A673 (cell line): ENCODE measurements at regions of chr9 and their contacts with region 1.

Region 1: GRCh38 chr9:129610473-129611301 is 10.2 kb downstream of the C9orf50 start:
- DNase-seq: peak; percentile 83
- H3K4me3 ChIP-seq: peak overlapping the region; percentile 81
- H3K27ac ChIP-seq: peak overlapping the region; percentile 88
- H3K4me1 ChIP-seq: peaks cover 46% of the 10 kb centered on the region
- H3K27me3 ChIP-seq: no peaks in the 10 kb centered on the region
- CTCF ChIP-seq: peak; percentile 62

Region 2: GRCh38 chr9:129006328-129007034 is 604.2 kb before region 1 on chr9:
- CTCF ChIA-PET with region 1: no interaction called
- POLR2A ChIA-PET with region 1: no interaction called
- intact Hi-C with region 1: loop called (anchors 5 kb)
- DNase-seq: peak; percentile 87
- H3K4me3 ChIP-seq: no peak overlapping the region
- H3K27ac ChIP-seq: peak overlapping the region; percentile 18
- H3K4me1 ChIP-seq: no peaks in the 10 kb centered on the region
- H3K27me3 ChIP-seq: no peaks in the 10 kb centered on the region
- CTCF ChIP-seq: peak; percentile 96

Region 3: DNA sequence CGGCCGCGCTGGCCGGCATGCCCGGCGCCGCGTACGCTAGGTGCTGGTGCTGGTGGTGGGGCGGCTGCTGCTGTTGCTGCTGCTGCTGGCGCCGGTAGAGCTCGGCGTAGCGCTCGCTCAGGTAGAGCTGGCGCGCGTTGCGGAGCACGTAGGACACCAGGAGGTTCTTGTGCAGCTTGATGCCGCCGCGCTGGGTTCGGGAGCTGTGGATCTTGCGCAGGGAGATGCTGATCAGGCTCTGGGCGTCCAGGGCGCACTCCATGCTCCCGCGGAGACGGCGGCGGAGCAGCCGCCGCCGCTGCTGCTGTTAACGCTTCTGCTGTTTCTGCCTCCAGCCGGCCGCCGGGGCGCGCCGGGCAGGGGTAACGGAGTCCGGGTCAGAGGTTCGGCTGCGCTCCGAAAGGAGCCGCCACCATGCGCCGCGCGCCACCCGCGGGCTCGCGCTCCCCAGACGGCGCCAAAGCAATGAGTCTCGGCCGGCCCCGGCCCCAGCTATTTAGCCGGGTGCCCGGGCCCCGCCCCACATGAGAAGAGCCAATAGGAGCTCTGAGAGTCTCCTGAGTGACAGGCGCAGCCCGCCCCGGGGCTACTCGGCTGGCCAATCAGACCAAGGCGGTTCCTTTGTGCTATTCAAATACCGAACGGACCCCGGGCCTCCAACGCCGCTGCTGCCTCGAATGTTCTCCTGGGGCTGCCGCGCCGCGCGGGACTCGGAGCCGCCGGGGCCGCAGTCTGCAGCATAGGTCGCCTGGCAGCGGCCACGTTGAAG is 432.7 kb before region 1 on chr9 and contains the start of gene IER5L:
- CTCF ChIA-PET with region 1: interaction called, 11 read pairs
- POLR2A ChIA-PET with region 1: interaction called, 4 read pairs
- intact Hi-C with region 1: loop called (anchors 2 kb)
- DNase-seq: peak; percentile 97
- H3K4me3 ChIP-seq: peak within 1 kb of the TSS; percentile 66
- H3K27ac ChIP-seq: peak within 1 kb of the TSS; percentile 93
- H3K4me1 ChIP-seq: peaks cover 24% of the 10 kb centered on the region
- H3K27me3 ChIP-seq: no peaks in the 10 kb centered on the region
- CTCF ChIP-seq: no peak
- total RNA-seq, gene IER5L: 12.1 and 14.0 TPM in 2 replicates

Region 4: GRCh38 chr9:129320575-129321263 is 290.0 kb before region 1 on chr9:
- CTCF ChIA-PET with region 1: no interaction called
- POLR2A ChIA-PET with region 1: no interaction called
- intact Hi-C with region 1: loop called (anchors 5 kb)
- DNase-seq: peak; percentile 92
- H3K4me3 ChIP-seq: peak overlapping the region; percentile 42
- H3K27ac ChIP-seq: peak overlapping the region; percentile 82
- H3K4me1 ChIP-seq: peaks cover 28% of the 10 kb centered on the region
- H3K27me3 ChIP-seq: no peaks in the 10 kb centered on the region
- CTCF ChIP-seq: peak; percentile 56

Region 5: DNA sequence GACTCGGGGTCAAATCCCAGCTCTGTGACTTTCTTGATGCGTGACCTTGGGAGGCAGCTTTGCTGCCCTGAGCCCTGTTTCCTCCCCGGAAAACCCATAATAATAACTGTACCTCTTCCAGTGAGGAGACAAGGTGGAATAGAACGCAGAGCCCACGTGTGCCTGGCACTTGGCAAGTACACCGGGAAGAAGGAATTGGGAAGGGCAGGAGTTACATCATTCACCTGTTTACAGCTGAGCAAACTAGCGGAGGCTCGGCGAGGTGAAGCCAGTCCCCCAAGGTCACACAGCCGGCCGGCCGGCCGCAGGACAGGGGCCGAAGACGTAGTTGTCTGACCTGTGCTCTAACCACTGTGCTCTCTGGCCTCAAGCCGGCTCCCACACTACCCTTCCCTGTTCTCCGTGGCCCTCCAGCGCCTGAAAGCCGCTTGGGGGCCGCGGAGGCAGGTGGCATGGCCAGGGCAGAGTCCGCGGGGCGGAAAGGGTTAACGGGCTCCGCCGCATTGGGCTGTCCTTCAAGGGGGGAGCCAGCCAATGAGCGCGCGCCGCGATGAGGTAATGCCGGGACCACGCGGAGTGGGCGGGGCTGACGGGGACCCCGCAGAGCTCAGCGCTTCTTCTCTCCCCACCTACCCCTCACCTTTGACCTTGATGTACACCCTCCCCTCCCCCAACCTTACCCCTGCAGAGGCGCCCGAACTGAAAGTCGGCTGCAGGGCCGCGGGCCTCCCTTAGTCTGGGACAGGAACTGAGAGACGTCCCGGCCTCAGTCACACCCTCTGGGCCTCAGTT is 115.0 kb before region 1 on chr9:
- CTCF ChIA-PET with region 1: no interaction called
- POLR2A ChIA-PET with region 1: no interaction called
- intact Hi-C with region 1: loop called (anchors 10 kb)
- DNase-seq: peak; percentile 95
- H3K4me3 ChIP-seq: peak overlapping the region; percentile 58
- H3K27ac ChIP-seq: peak overlapping the region; percentile 96
- H3K4me1 ChIP-seq: peaks cover 65% of the 10 kb centered on the region
- H3K27me3 ChIP-seq: no peaks in the 10 kb centered on the region
- CTCF ChIP-seq: no peak

Region 6: GRCh38 chr9:129569502-129570449 is 40.9 kb before region 1 on chr9:
- CTCF ChIA-PET with region 1: interaction called, 3 read pairs
- POLR2A ChIA-PET with region 1: interaction called, 13 read pairs
- intact Hi-C with region 1: no loop called
- DNase-seq: peak; percentile 38
- H3K4me3 ChIP-seq: peak overlapping the region; percentile 57
- H3K27ac ChIP-seq: peak overlapping the region; percentile 79
- H3K4me1 ChIP-seq: peaks cover 35% of the 10 kb centered on the region
- H3K27me3 ChIP-seq: no peaks in the 10 kb centered on the region
- CTCF ChIP-seq: peak; percentile 44; the same call in 1 of the 2 replicates